ENCODE measurements at regions of chr19 and their contacts with region 1.

Region 1: DNA sequence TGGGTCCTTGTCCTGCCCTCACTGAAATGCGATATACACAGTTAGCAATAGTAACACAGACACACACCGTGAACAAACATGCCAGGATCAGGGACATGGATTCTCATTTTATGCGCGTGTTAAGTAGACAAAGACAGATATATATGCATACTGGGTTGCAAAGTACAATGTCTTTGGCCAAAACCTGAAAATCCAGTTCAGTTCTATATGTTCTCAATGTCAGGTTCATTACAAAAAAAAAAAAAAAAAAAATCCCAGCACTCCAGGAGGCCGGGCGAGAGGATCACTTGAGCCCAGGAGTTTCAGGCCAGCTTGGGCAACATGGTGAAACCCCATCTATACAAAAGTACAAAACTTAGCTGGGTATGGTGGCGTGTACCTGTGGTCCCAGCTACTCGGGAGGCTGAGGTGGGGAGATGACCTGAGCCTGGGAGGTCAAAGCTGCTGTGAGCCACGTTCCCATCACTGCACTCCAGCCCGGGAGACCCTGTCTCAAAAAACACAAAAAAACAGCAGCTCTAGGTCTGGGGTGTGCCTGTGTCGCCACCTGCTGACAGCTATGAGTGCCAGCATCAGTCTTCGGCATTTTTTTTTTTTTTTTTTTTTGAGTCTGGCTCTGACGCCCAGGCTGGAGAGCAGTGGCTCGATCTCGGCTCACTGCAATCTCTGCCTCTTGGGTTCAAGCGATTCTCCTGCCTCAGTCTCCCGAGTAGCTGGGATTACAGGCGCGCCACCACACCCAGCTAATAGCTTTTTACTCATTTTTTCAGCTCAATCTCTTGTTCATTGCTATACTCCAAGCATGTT is 10.3 kb downstream of the AP2S1 start:
- DNase-seq: peak; percentile 69 to 86 (median 77)
- H3K4me3 ChIP-seq: no peak overlapping the region
- H3K27ac ChIP-seq: no peak overlapping the region
- H3K4me1 ChIP-seq: no peaks in the 10 kb centered on the region
- H3K27me3 ChIP-seq: no peaks in the 10 kb centered on the region

Region 2: GRCh38 chr19:46746281-46747013 is 93.9 kb before region 1 on chr19 and contains the start of gene STRN4:
- CTCF ChIA-PET with region 1: interaction called, 189 read pairs
- POLR2A ChIA-PET with region 1: no interaction called
- DNase-seq: peak; percentile 50 to 73 (median 62)
- H3K4me3 ChIP-seq: peak within 1 kb of the TSS; percentile 58 to 93 (median 89)
- H3K27ac ChIP-seq: peak within 1 kb of the TSS; percentile 54 to 89
- H3K4me1 ChIP-seq: peaks cover 0 to 26% (median 18%) of the 10 kb centered on the region in 4 experiments
- H3K27me3 ChIP-seq: no peaks in the 10 kb centered on the region

Region 3: DNA sequence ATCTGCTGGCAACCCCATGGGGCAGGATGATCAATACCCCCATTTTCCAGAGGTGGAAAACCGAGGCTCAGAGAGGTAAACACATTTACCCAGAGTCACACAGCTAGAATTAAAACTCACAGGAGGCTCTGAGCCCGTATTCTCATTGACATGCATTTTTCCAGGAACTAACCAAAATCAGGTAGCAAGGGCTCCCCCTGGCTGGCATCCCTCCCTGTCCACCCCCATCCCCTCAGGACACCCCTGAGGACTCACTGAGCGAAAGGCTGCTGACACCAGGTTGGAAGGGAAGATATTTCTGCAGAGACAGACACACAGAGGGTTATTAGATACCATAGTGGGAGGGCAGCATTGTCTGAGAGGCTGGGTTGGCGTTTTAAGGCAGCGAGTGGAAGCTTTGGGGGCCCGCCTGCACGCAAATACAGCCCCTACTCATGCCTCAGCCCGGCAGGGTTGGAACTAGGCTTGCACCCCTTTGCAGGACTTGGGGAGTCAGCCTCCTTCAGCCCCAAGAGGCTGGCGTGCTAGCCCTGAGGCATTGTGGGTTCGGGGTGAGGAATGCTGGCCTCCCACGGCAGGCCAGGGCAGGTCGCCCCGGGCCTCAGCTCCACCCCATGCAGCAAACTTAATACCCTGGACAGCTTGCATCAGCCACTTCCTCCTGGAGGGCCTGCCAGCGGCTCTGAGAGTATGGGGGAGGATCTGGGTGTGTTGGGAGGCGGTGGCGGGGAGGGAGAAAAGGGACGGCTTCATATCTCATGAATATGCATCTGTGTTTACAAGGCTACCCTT is 55.9 kb before region 1 on chr19:
- CTCF ChIA-PET with region 1: interaction called, 25 read pairs
- POLR2A ChIA-PET with region 1: interaction called, 7 read pairs
- DNase-seq: peak; percentile 57 to 79 (median 66)
- H3K4me3 ChIP-seq: peak overlapping the region in 5 of 7 experiments; percentile 30 to 98 (median 35)
- H3K27ac ChIP-seq: peak overlapping the region in 1 of 2 experiments; percentile 84
- H3K4me1 ChIP-seq: peaks cover 5 to 58% (median 49%) of the 10 kb centered on the region in 4 experiments
- H3K27me3 ChIP-seq: no peaks in the 10 kb centered on the region

Region 4: DNA sequence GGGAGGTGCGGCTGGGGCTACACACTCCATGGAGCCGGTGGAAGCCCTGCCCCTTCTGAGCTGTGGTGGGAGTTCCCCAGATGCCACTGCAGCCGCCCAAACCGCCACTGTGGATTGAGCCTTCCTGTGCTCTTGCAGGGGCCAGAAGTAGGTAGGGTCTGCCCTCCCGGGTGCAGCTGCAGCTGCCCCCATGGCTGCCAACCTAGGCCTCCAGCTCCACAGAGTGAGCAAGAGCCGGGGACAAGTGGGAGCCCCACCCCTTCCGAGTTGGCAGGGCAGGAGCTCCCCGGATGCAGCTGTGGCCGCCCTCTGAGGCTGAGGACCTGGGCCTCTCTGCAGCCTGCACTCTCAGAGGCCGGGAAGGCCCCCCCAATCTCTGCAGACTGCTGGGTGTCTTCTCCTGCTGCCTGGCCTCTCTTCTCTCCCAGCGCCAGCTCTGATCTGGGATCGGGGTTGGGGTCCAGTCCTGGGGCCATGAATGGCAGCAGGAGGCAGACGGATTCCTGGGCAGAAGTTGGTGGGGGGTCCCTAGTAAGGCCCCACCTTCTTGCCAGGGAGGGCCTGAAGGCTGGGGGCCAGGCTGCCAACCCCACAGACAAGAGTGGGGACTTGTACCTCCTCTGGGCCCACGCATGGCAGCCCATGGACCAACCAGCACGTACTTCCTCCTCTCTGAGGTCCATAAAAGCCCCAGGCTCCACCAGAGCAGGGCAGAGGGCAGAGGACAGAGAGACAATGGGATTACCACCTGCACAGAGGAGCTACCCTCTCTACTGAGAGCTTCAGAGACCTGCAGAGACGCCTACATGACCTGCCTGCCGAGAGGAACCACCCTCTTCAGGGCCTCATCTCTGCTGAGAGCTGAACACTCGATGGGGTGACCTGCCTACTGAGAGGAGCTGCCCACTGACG is 18.6 kb before region 1 on chr19:
- CTCF ChIA-PET with region 1: interaction called, 14 read pairs
- POLR2A ChIA-PET with region 1: no interaction called
- DNase-seq: peak in 2 of 3 donors; percentile 87 to 89
- H3K4me3 ChIP-seq: peak overlapping the region in 1 of 7 experiments; percentile 32
- H3K27ac ChIP-seq: no peak overlapping the region
- H3K4me1 ChIP-seq: peaks cover 0 to 34% (median 27%) of the 10 kb centered on the region in 4 experiments
- H3K27me3 ChIP-seq: no peaks in the 10 kb centered on the region

Region 5: DNA sequence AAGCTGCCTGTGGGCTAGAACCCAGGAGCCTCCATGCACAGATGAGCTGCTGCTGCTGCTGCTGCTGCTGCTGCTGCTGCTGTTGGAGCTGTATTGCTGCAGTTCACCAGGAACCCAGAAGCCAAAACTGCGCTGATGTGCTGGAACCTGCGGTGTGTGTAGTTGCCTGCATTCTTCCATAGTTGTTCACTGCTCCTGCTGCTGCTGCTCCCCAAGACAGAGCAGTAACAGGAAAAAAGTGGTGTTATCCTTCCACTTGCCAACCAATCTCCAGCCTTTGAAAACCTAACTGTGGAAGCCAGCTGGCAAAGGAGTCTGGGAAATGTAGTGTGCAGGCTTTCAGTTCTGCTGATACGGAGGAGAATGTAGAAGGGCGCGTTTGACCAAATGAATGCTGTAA is 58.4 kb after region 1 on chr19:
- CTCF ChIA-PET with region 1: no interaction called
- POLR2A ChIA-PET with region 1: no interaction called
- DNase-seq: no peak
- H3K4me3 ChIP-seq: no peak overlapping the region
- H3K27ac ChIP-seq: no peak overlapping the region
- H3K4me1 ChIP-seq: peaks cover 0 to 5% (median 0%) of the 10 kb centered on the region in 4 experiments
- H3K27me3 ChIP-seq: no peaks in the 10 kb centered on the region

Measured in common myeloid progenitor, CD34-positive (primary cell).